ENCODE measurements at regions of chr10 and their contacts with region 1.

Region 1: GRCh38 chr10:128178319-128178958 is 52.2 kb upstream of the MKI67 start:
- DNase-seq: peak; percentile 39 to 73
- H3K4me3 ChIP-seq: no peak overlapping the region
- H3K27ac ChIP-seq: no peak overlapping the region
- H3K4me1 ChIP-seq: peaks cover 0 to 3% (median 2%) of the 10 kb centered on the region in 4 experiments; a peak in 3 of 7 replicates
- H3K27me3 ChIP-seq: no peaks in the 10 kb centered on the region
- CTCF ChIP-seq: peak; percentile 80 to 93 (median 87)
- EP300 ChIP-seq: no peak
- POLR2A ChIP-seq: no peak
- RAD21 ChIP-seq: peak; percentile 62 to 71

Region 2: GRCh38 chr10:128165536-128165935 is 12.9 kb before region 1 on chr10:
- CTCF ChIA-PET with region 1: interaction called, 24 read pairs
- POLR2A ChIA-PET with region 1: no interaction called
- DNase-seq: no peak
- H3K4me3 ChIP-seq: no peak overlapping the region
- H3K27ac ChIP-seq: no peak overlapping the region
- H3K4me1 ChIP-seq: no peaks in the 10 kb centered on the region
- H3K27me3 ChIP-seq: no peaks in the 10 kb centered on the region; a peak in 2 of 7 replicates
- CTCF ChIP-seq: no peak
- EP300 ChIP-seq: no peak
- POLR2A ChIP-seq: no peak
- RAD21 ChIP-seq: no peak

Region 3: GRCh38 chr10:128211953-128212727 is 33.7 kb after region 1 on chr10:
- CTCF ChIA-PET with region 1: interaction called, 12 read pairs
- POLR2A ChIA-PET with region 1: no interaction called
- DNase-seq: peak; percentile 71 to 95
- H3K4me3 ChIP-seq: peak overlapping the region in 1 of 4 experiments; percentile 15; a peak in 1 of 8 replicates
- H3K27ac ChIP-seq: no peak overlapping the region
- H3K4me1 ChIP-seq: peaks cover 0 to 7% (median 5%) of the 10 kb centered on the region in 4 experiments; a peak in 4 of 7 replicates
- H3K27me3 ChIP-seq: peaks cover 0 to 12% (median 9%) of the 10 kb centered on the region in 4 experiments; a peak in 6 of 7 replicates
- CTCF ChIP-seq: peak; percentile 76 to 90 (median 90)
- EP300 ChIP-seq: 0 out of 3 replicates have a peak, but pooled peaks of 1 of the 2 experiments have one; percentile 44
- POLR2A ChIP-seq: no peak
- RAD21 ChIP-seq: peak; percentile 51 to 67

Measured in H1 (cell line).